ENCODE measurements at regions of chr10 and their contacts with region 1.

Region 1: GRCh38 chr10:92839191-92840085 is 8.9 kb upstream of the EXOC6 start:
- DNase-seq: peak; percentile 63
- H3K4me3 ChIP-seq: no peak overlapping the region
- H3K27ac ChIP-seq: no peak overlapping the region
- H3K4me1 ChIP-seq: peaks cover 7 to 12% of the 10 kb centered on the region in 2 experiments; a peak in 2 of 4 replicates
- H3K27me3 ChIP-seq: no peaks in the 10 kb centered on the region
- CTCF ChIP-seq: peak; percentile 50
- EP300 ChIP-seq: no peak
- RAD21 ChIP-seq: peak; percentile 29; the same call in 1 of the 2 replicates

Region 2: GRCh38 chr10:92502296-92502808 is 337.1 kb before region 1 on chr10:
- CTCF ChIA-PET with region 1: no interaction called
- POLR2A ChIA-PET with region 1: no interaction called
- DNase-seq: no peak
- H3K4me3 ChIP-seq: no peak overlapping the region
- H3K27ac ChIP-seq: no peak overlapping the region
- H3K4me1 ChIP-seq: no peaks in the 10 kb centered on the region; a peak in 1 of 4 replicates
- H3K27me3 ChIP-seq: no peaks in the 10 kb centered on the region
- CTCF ChIP-seq: no peak
- EP300 ChIP-seq: no peak
- RAD21 ChIP-seq: no peak

Region 3: DNA sequence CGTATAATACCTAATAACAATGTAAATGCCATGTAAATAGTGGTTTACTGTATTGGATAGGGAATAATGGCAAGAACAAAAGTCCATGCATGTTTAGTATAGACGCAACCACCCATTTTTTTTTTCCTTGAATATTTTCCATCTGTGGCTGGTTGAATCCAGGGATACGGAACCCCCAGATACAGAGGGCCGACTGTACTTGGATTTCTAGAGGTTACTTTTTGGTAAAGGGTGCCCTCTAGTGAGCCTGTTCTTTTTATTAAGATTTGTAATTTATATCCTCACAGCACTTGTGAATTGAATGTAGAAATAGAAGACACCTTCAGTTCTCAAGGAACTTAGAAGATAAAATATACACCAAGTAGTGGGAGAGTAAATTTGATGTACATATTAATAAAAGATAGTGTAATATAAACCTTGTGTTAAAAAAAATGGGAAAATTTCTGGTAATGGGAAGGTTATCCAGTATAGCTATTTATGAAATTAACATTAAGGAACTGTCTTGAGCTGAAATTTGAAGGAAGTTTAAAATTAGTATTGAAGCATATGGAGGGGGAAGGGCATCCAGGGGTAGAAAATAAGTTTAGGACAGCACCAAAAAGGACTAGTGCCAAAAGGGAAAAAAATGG is 40.9 kb after region 1 on chr10:
- CTCF ChIA-PET with region 1: interaction called, 27 read pairs
- POLR2A ChIA-PET with region 1: no interaction called
- DNase-seq: peak; percentile 37
- H3K4me3 ChIP-seq: no peak overlapping the region
- H3K27ac ChIP-seq: no peak overlapping the region
- H3K4me1 ChIP-seq: no peaks in the 10 kb centered on the region
- H3K27me3 ChIP-seq: no peaks in the 10 kb centered on the region
- CTCF ChIP-seq: peak; percentile 76
- EP300 ChIP-seq: no peak
- RAD21 ChIP-seq: peak; percentile 78